GM12878 (cell line): ENCODE measurements at regions of chr15 and their contacts with region 1.

Region 1: DNA sequence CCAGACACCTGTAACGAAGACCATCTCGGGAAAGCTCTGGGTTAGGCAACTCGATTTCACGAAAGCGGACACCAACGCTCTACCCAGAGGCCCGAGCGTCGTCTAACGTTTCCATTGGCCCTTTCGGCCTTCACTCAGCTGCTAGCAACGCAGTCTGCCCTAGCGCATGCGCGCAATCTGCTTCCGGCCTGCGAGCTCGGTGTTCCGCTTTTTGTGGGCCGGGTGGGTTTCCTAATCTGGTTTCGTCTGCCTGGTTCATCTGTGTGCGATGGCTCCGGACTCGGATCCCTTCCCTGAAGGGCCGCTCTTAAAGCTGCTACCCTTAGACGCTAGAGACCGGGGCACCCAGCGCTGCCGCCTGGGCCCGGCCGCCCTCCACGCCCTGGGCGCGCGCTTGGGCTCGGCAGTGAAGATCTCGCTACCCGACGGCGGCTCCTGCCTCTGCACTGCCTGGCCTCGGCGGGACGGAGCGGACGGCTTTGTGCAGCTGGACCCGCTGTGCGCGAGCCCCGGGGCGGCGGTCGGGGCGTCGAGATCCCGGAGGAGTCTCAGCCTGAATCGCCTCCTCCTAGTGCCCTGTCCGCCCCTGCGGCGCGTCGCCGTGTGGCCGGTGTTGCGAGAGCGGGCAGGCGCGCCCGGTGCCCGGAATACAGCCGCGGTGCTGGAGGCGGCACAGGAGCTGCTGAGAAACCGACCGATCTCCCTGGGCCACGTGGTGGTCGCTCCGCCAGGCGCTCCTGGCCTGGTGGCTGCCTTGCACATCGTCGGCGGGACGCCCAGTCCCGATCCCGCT is 24.0 kb upstream of the GATM start:
- DNase-seq: peak; percentile 98
- ATAC-seq: peak; percentile 92
- H3K4me3 ChIP-seq: peak overlapping the region; percentile 83
- H3K27ac ChIP-seq: peak overlapping the region; percentile 89
- H3K4me1 ChIP-seq: peaks cover 6% of the 10 kb centered on the region; the same call in 1 of the 2 replicates
- H3K27me3 ChIP-seq: no peaks in the 10 kb centered on the region
- CTCF ChIP-seq: no peak
- EP300 ChIP-seq: no peak
- POLR2A ChIP-seq: peak; percentile 89
- RAD21 ChIP-seq: no peak

Region 2: GRCh38 chr15:45126535-45127158 is 275.7 kb before region 1 on chr15:
- CTCF ChIA-PET with region 1: interaction called, 11 read pairs
- POLR2A ChIA-PET with region 1: no interaction called
- RAD21 ChIA-PET with region 1: no interaction called
- SMC1A ChIA-PET with region 1: interaction called, 9 read pairs
- in situ Hi-C with region 1: no loop called
- intact Hi-C with region 1: no loop called
- DNase-seq: no peak
- ATAC-seq: peak; percentile 89
- H3K4me3 ChIP-seq: no peak overlapping the region
- H3K27ac ChIP-seq: no peak overlapping the region
- H3K4me1 ChIP-seq: no peaks in the 10 kb centered on the region
- H3K27me3 ChIP-seq: peaks cover 4 to 8% of the 10 kb centered on the region in 2 experiments
- CTCF ChIP-seq: peak; percentile 64 to 72 (median 67)
- EP300 ChIP-seq: no peak
- POLR2A ChIP-seq: no peak
- RAD21 ChIP-seq: peak; percentile 45

Region 3: GRCh38 chr15:45198337-45199135 is 203.8 kb before region 1 on chr15:
- CTCF ChIA-PET with region 1: interaction called, 211 read pairs
- POLR2A ChIA-PET with region 1: interaction called, 25 read pairs
- RAD21 ChIA-PET with region 1: interaction called, 87 read pairs
- SMC1A ChIA-PET with region 1: interaction called, 111 read pairs
- in situ Hi-C with region 1: no loop called
- intact Hi-C with region 1: loop called (anchors 1 kb)
- DNase-seq: peak; percentile 98
- ATAC-seq: peak; percentile 63
- H3K4me3 ChIP-seq: peak overlapping the region; percentile 86
- H3K27ac ChIP-seq: peak overlapping the region; percentile 95
- H3K4me1 ChIP-seq: no peaks in the 10 kb centered on the region; the same call in none of the 2 replicates
- H3K27me3 ChIP-seq: no peaks in the 10 kb centered on the region
- CTCF ChIP-seq: peak; percentile 71 to 81 (median 80)
- EP300 ChIP-seq: peak in 1 of 2 experiments; percentile 90; a peak in 1 of 4 replicates
- POLR2A ChIP-seq: peak; percentile 96
- RAD21 ChIP-seq: no peak

Region 4: DNA sequence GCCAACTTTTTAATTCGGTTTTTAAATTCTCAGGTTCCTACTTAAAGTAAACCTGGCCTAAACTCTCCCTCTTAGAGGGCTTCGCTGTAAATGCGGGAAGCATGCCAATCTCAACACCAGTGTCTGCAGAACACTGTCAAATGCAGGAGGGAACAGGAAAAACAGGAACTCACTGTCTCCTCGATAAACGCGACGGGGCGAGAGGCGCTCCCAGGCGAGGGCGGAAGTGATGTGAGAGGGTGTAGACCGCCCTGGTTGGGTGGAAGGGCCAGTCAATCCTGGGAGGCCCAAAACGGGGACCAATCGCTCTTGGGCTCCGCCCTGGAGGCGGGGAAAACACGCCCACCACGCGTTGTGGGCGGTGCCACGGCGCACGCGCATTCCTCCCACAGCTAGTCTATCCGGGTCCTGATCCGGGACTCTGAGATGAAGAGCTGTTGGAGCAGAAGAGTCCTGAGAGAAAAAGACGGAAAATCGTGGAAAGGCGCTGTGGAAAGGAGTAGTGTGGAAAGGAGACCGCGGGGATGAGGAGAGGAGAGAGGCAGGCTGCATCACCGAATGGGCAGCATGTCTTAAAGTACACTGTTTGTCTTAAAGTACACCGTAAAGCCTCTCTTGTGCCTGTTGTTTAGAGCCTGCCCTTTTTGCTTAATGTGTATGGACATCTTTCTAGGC is 123.2 kb before region 1 on chr15:
- CTCF ChIA-PET with region 1: interaction called, 4 read pairs
- POLR2A ChIA-PET with region 1: no interaction called
- RAD21 ChIA-PET with region 1: interaction called, 10 read pairs
- SMC1A ChIA-PET with region 1: interaction called, 4 read pairs
- in situ Hi-C with region 1: no loop called
- intact Hi-C with region 1: loop called (anchors 2 kb)
- DNase-seq: peak; percentile 95
- ATAC-seq: peak; percentile 100
- H3K4me3 ChIP-seq: peak overlapping the region; percentile 95
- H3K27ac ChIP-seq: peak overlapping the region; percentile 45
- H3K4me1 ChIP-seq: peaks cover 3% of the 10 kb centered on the region
- H3K27me3 ChIP-seq: no peaks in the 10 kb centered on the region
- CTCF ChIP-seq: no peak
- EP300 ChIP-seq: no peak
- POLR2A ChIP-seq: peak; percentile 91
- RAD21 ChIP-seq: no peak

Region 5: DNA sequence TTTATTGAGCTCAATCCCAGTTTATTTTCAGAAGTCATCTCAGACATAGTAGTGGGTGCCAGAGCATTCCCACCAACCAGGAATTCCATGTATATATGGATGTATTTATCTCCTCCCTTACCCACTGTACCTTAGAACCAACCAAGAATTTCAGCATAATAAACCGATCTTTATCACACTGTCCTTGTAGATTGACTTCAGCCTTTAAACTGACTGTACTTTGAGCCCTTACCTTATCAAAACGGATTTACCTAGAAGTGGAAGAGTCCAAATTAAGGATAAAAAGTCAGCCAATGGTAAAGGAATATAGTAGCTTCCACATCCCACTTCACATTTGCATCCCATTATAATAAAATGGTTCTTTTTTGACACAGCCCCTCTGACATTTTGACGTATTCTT is 61.9 kb before region 1 on chr15:
- CTCF ChIA-PET with region 1: interaction called, 15 read pairs
- POLR2A ChIA-PET with region 1: interaction called, 9 read pairs
- RAD21 ChIA-PET with region 1: interaction called, 7 read pairs
- SMC1A ChIA-PET with region 1: interaction called, 8 read pairs
- in situ Hi-C with region 1: no loop called
- intact Hi-C with region 1: no loop called
- DNase-seq: no peak
- ATAC-seq: no peak
- H3K4me3 ChIP-seq: no peak overlapping the region
- H3K27ac ChIP-seq: no peak overlapping the region
- H3K4me1 ChIP-seq: no peaks in the 10 kb centered on the region
- H3K27me3 ChIP-seq: no peaks in the 10 kb centered on the region
- CTCF ChIP-seq: no peak
- EP300 ChIP-seq: no peak
- POLR2A ChIP-seq: no peak
- RAD21 ChIP-seq: no peak

Region 6: GRCh38 chr15:45384700-45385099 is 17.7 kb before region 1 on chr15:
- CTCF ChIA-PET with region 1: interaction called, 38 read pairs
- POLR2A ChIA-PET with region 1: interaction called, 7 read pairs
- RAD21 ChIA-PET with region 1: interaction called, 3 read pairs
- SMC1A ChIA-PET with region 1: interaction called, 14 read pairs
- in situ Hi-C with region 1: no loop called
- intact Hi-C with region 1: no loop called
- DNase-seq: no peak
- ATAC-seq: no peak
- H3K4me3 ChIP-seq: no peak overlapping the region
- H3K27ac ChIP-seq: no peak overlapping the region
- H3K4me1 ChIP-seq: no peaks in the 10 kb centered on the region
- H3K27me3 ChIP-seq: no peaks in the 10 kb centered on the region
- CTCF ChIP-seq: no peak
- EP300 ChIP-seq: no peak
- POLR2A ChIP-seq: no peak
- RAD21 ChIP-seq: no peak

Region 7: DNA sequence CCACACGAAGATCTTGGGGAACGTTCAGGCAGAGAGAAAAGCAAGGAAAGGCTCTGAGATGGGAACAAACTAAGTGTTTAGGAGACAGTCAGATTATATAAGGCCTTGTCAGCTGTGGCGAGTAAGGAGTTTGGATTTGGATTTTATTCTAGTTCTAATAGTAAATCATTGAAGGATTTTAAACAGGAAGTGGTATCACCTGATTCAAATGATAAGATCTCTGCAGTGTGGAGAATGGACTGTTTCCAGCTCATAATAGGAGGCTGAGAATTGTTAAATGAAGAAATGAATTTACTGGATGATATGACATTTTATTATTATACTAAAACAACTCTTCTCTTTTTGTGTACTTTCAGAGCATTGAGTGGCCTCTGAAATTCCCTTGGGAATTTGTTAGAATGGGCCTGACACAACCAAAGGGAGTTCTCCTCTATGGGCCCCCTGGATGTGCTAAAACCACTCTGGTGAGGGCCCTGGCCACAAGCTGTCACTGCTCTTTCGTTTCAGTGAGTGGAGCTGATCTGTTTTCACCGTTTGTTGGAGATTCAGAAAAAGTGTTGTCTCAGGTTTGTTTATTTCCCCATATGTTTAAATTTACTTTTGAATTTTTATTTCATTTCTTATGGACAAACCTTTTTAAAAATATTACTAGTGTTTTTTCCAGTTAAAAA is 12.0 kb after region 1 on chr15:
- CTCF ChIA-PET with region 1: interaction called, 6 read pairs
- POLR2A ChIA-PET with region 1: interaction called, 8 read pairs
- RAD21 ChIA-PET with region 1: interaction called, 12 read pairs
- SMC1A ChIA-PET with region 1: interaction called, 7 read pairs
- in situ Hi-C with region 1: no loop called
- intact Hi-C with region 1: no loop called
- DNase-seq: no peak
- ATAC-seq: peak; percentile 74
- H3K4me3 ChIP-seq: no peak overlapping the region
- H3K27ac ChIP-seq: no peak overlapping the region
- H3K4me1 ChIP-seq: no peaks in the 10 kb centered on the region
- H3K27me3 ChIP-seq: no peaks in the 10 kb centered on the region
- CTCF ChIP-seq: no peak
- EP300 ChIP-seq: no peak
- POLR2A ChIP-seq: no peak
- RAD21 ChIP-seq: no peak

Region 8: GRCh38 chr15:45476410-45476809 is 74.1 kb after region 1 on chr15:
- CTCF ChIA-PET with region 1: no interaction called
- POLR2A ChIA-PET with region 1: no interaction called
- RAD21 ChIA-PET with region 1: no interaction called
- SMC1A ChIA-PET with region 1: no interaction called
- in situ Hi-C with region 1: no loop called
- intact Hi-C with region 1: no loop called
- DNase-seq: no peak
- ATAC-seq: no peak
- H3K4me3 ChIP-seq: no peak overlapping the region
- H3K27ac ChIP-seq: no peak overlapping the region
- H3K4me1 ChIP-seq: no peaks in the 10 kb centered on the region
- H3K27me3 ChIP-seq: no peaks in the 10 kb centered on the region
- CTCF ChIP-seq: no peak
- EP300 ChIP-seq: no peak
- POLR2A ChIP-seq: no peak
- RAD21 ChIP-seq: no peak